ENCODE measurements at regions of chr6 and their contacts with region 1.

Region 1: GRCh38 chr6:143806282-143807102 is 36.6 kb upstream of the LTV1 start:
- DNase-seq: peak; percentile 48
- H3K4me3 Mint-ChIP-seq: peak overlapping the region; percentile 56
- H3K27ac Mint-ChIP-seq: peak overlapping the region; percentile 94
- H3K4me1 Mint-ChIP-seq: peaks cover 55% of the 10 kb centered on the region
- H3K27me3 Mint-ChIP-seq: peaks cover 3% of the 10 kb centered on the region

Region 2: GRCh38 chr6:143441680-143442545 is 364.6 kb before region 1 on chr6:
- intact Hi-C with region 1: loop called (anchors 1 kb)
- DNase-seq: peak; percentile 13
- H3K4me3 Mint-ChIP-seq: peak overlapping the region; percentile 53
- H3K27ac Mint-ChIP-seq: peak overlapping the region; percentile 91
- H3K4me1 Mint-ChIP-seq: peaks cover 61% of the 10 kb centered on the region
- H3K27me3 Mint-ChIP-seq: no peaks in the 10 kb centered on the region

Region 3: DNA sequence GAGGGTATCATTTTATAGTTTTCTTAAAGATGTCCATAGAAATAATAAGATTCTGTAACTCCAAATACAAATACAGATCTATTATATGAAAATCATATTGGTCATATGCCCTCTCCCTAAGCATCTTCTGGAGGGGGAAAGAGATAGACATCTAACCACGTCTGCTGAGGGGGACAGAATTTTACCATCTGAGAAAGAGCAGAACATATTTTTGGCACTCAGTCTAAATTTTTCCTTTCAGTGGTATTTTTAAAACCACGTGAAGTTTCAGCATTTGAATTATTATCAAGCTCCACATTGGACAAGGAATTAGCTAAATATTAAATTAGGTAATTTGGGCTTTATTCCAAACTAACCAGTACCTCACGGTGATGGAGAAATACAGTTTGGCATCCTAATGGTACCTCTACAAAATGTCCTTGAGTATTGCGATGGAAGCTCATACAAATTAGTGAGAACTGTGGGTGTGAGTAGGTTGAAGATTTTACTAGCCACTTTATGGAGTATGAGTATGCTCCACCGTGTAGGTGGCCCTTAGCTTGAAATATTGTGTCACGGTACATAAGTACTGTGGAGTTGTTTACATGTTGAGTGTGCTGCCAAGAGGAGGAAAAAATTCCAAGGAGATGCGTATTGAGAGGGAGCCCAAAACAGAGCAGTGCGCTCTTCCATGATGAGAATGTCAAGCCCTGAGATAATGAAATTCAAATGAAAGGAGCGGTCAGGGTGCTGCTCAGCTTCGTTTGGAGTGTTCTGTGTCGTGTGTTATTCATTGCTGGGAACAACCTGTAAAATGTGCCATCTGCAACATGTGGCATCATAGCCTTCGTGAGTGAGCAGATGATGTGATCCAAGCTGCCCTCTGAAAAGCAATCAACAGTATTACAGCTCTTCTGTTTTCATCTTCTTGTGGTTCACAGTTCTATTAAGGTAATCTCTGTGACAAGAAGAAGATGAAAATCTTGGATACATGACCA is 177.1 kb before region 1 on chr6:
- intact Hi-C with region 1: loop called (anchors 1 kb)
- DNase-seq: no peak
- H3K4me3 Mint-ChIP-seq: peak overlapping the region; percentile 34
- H3K27ac Mint-ChIP-seq: peak overlapping the region; percentile 76
- H3K4me1 Mint-ChIP-seq: peaks cover 45% of the 10 kb centered on the region
- H3K27me3 Mint-ChIP-seq: no peaks in the 10 kb centered on the region

Region 4: GRCh38 chr6:143734641-143735063 is 71.8 kb before region 1 on chr6:
- intact Hi-C with region 1: loop called (anchors 2 kb)
- DNase-seq: no peak
- H3K4me3 Mint-ChIP-seq: no peak overlapping the region
- H3K27ac Mint-ChIP-seq: no peak overlapping the region
- H3K4me1 Mint-ChIP-seq: peaks cover 41% of the 10 kb centered on the region
- H3K27me3 Mint-ChIP-seq: no peaks in the 10 kb centered on the region

Region 5: GRCh38 chr6:143745166-143746133 is 61.0 kb before region 1 on chr6:
- intact Hi-C with region 1: no loop called
- DNase-seq: no peak
- H3K4me3 Mint-ChIP-seq: no peak overlapping the region
- H3K27ac Mint-ChIP-seq: no peak overlapping the region
- H3K4me1 Mint-ChIP-seq: no peaks in the 10 kb centered on the region
- H3K27me3 Mint-ChIP-seq: no peaks in the 10 kb centered on the region

Region 6: GRCh38 chr6:144131248-144131709 is 324.8 kb after region 1 on chr6:
- intact Hi-C with region 1: loop called (anchors 1 kb)
- DNase-seq: no peak
- H3K4me3 Mint-ChIP-seq: no peak overlapping the region
- H3K27ac Mint-ChIP-seq: peak overlapping the region; percentile 93
- H3K4me1 Mint-ChIP-seq: peaks cover 16% of the 10 kb centered on the region
- H3K27me3 Mint-ChIP-seq: no peaks in the 10 kb centered on the region